ENCODE measurements at regions of chr10 and their contacts with region 1.

Region 1: DNA sequence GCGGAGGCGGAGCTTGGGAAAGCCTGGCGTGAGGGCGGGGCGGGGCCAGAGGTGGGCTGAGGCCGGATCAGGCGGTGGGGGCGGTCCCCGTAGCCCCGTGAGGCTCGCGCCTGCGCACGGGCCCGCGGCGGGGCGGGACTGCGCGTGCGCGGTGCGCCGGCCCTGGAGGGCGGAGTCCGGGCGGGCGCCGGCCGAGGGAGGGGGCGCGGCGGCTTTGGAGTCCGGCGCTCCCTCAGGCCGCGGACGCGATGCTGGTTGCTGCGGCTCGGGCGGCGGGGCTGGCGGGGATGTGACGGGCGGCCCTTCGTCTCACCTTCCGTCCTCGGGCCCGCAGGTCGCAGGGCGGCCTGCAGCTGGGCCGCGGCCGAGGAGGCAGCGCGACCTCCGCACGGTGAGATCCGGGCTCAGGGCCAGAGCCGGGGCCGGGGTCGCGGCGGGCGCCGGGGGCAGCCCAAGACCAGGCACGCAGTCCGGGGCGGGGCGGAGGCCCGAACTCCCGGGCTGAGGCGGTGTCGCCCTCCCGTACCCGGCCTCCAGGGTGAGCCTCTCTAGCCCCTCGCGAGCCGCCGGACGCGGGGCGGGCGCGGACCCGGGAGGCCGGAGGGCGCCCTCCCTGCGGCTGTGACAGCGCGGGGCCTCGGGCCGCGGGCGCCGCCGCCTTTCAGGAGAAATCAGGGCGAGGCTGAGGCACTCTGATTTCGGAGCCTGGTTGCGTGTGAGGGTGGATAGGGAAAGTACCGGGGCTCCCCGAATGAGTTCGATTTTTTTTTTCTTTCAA is at the start of gene CCSER2:
- DNase-seq: peak; percentile 90
- H3K4me3 Mint-ChIP-seq: peak within 1 kb of the TSS; percentile 86
- H3K27ac Mint-ChIP-seq: peak within 1 kb of the TSS; percentile 99
- H3K4me1 Mint-ChIP-seq: peaks cover 35% of the 10 kb centered on the region
- H3K27me3 Mint-ChIP-seq: peaks cover under 1% of the 10 kb centered on the region
- total RNA-seq, gene CCSER2: 86.4 to 93.1 TPM

Region 2: GRCh38 chr10:84230359-84230758 is 98.2 kb before region 1 on chr10:
- CTCF ChIA-PET with region 1: no interaction called
- POLR2A ChIA-PET with region 1: no interaction called
- DNase-seq: no peak
- H3K4me3 Mint-ChIP-seq: no peak overlapping the region
- H3K27ac Mint-ChIP-seq: no peak overlapping the region
- H3K4me1 Mint-ChIP-seq: no peaks in the 10 kb centered on the region
- H3K27me3 Mint-ChIP-seq: peaks cover 21% of the 10 kb centered on the region

Region 3: DNA sequence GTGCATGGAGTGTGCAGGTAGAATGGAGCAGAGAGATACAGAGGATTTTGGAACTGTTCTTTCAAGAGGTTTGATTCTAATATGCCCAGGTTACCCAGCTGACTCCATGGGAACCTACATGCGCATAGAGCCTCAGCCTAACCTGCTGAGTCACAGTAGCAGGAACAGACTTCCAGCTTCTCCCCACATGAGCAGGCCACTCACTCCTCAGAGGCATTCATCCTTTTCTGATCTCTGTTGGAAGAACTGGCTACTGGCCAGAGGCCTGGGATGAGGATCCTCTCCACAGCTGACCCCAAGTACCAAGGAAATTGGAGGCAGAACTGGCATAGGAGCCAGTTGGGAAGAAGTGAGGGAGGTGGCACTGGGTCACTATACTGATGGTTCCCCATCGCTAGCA is 18.1 kb before region 1 on chr10:
- CTCF ChIA-PET with region 1: interaction called, 11 read pairs
- POLR2A ChIA-PET with region 1: interaction called, 4 read pairs
- DNase-seq: no peak
- H3K4me3 Mint-ChIP-seq: no peak overlapping the region
- H3K27ac Mint-ChIP-seq: no peak overlapping the region
- H3K4me1 Mint-ChIP-seq: peaks cover 56% of the 10 kb centered on the region
- H3K27me3 Mint-ChIP-seq: peaks cover 3% of the 10 kb centered on the region

Region 4: DNA sequence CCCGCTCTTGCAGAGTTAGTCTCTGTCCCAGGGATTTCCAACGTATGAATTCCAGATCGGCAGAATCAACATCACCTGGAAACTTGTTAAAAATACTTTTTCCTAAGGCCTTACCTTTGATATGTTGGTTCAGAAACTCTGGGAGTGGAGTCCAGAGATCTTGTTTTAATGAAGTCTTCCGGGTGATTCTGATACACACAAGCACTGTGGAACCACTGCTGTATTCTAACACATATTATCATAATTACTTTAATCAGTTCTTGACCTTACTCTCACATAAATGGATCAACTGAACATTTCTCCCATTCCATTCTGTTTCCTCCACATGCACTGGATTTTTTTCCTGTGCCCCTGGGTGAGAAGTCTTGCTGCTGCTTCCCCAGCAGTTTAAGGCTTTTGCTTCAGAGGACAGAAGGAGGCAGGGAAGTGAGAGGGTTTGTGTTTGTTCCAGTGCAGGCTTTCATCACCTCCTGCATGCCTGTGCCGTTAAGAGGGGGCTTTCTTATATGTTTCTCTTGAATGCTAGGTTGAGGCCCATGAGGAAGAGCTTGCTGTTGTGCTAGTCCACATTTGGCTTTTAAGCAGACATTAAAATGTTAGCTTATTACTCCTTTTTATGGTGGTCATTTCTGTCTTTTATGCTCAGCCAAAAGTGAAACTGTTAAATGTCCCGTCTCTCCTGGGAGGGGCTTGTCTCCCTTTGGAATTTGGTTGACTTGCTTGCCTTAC is 32.2 kb after region 1 on chr10:
- CTCF ChIA-PET with region 1: no interaction called
- POLR2A ChIA-PET with region 1: no interaction called
- DNase-seq: no peak
- H3K4me3 Mint-ChIP-seq: no peak overlapping the region
- H3K27ac Mint-ChIP-seq: no peak overlapping the region
- H3K4me1 Mint-ChIP-seq: peaks cover 62% of the 10 kb centered on the region
- H3K27me3 Mint-ChIP-seq: no peaks in the 10 kb centered on the region

Measured in activated CD4-positive, alpha-beta T cell treated with anti-CD3 and anti-CD28 coated beads, Interleukin-2, amount 10 ng/mL, durations not matched to agents 7 days and 5 days (primary cell).